Calu3 (cell line): ENCODE measurements at regions of chr1 and their contacts with region 1.

Region 1: GRCh38 chr1:107056426-107057196 is at the start of gene PRMT6:
- DNase-seq: peak; percentile 77
- H3K4me3 Mint-ChIP-seq: peak within 1 kb of the TSS; percentile 85
- H3K27ac Mint-ChIP-seq: peak within 1 kb of the TSS; percentile 62
- H3K4me1 Mint-ChIP-seq: no peaks in the 10 kb centered on the region
- H3K27me3 Mint-ChIP-seq: no peaks in the 10 kb centered on the region
- CTCF ChIP-seq: no peak
- total RNA-seq, gene PRMT6: 15.4 and 20.9 TPM in 2 replicates

Region 2: GRCh38 chr1:106659490-106660245 is 396.9 kb before region 1 on chr1:
- CTCF ChIA-PET with region 1: no interaction called
- intact Hi-C with region 1: no loop called
- DNase-seq: no peak
- H3K4me3 Mint-ChIP-seq: no peak overlapping the region
- H3K27ac Mint-ChIP-seq: no peak overlapping the region
- H3K4me1 Mint-ChIP-seq: no peaks in the 10 kb centered on the region
- H3K27me3 Mint-ChIP-seq: no peaks in the 10 kb centered on the region
- CTCF ChIP-seq: no peak

Region 3: GRCh38 chr1:106768501-106768900 is 288.1 kb before region 1 on chr1:
- CTCF ChIA-PET with region 1: no interaction called
- intact Hi-C with region 1: loop called (anchors 1 kb)
- DNase-seq: no peak
- H3K4me3 Mint-ChIP-seq: peak overlapping the region; percentile 51
- H3K27ac Mint-ChIP-seq: peak overlapping the region; percentile 78
- H3K4me1 Mint-ChIP-seq: peaks cover 17% of the 10 kb centered on the region
- H3K27me3 Mint-ChIP-seq: no peaks in the 10 kb centered on the region
- CTCF ChIP-seq: no peak

Region 4: GRCh38 chr1:106998423-106999002 is 58.1 kb before region 1 on chr1:
- CTCF ChIA-PET with region 1: no interaction called
- intact Hi-C with region 1: loop called (anchors 2 kb)
- DNase-seq: no peak
- H3K4me3 Mint-ChIP-seq: no peak overlapping the region
- H3K27ac Mint-ChIP-seq: no peak overlapping the region
- H3K4me1 Mint-ChIP-seq: no peaks in the 10 kb centered on the region
- H3K27me3 Mint-ChIP-seq: no peaks in the 10 kb centered on the region
- CTCF ChIP-seq: no peak